Posterior vena cava (tissue), 2 donors: ENCODE measurements at regions of chr7 and their contacts with region 1.

Region 1: GRCh38 chr7:69677054-69677852 is 79.0 kb downstream of the AUTS2 start:
- DNase-seq: no peak

Region 2: DNA sequence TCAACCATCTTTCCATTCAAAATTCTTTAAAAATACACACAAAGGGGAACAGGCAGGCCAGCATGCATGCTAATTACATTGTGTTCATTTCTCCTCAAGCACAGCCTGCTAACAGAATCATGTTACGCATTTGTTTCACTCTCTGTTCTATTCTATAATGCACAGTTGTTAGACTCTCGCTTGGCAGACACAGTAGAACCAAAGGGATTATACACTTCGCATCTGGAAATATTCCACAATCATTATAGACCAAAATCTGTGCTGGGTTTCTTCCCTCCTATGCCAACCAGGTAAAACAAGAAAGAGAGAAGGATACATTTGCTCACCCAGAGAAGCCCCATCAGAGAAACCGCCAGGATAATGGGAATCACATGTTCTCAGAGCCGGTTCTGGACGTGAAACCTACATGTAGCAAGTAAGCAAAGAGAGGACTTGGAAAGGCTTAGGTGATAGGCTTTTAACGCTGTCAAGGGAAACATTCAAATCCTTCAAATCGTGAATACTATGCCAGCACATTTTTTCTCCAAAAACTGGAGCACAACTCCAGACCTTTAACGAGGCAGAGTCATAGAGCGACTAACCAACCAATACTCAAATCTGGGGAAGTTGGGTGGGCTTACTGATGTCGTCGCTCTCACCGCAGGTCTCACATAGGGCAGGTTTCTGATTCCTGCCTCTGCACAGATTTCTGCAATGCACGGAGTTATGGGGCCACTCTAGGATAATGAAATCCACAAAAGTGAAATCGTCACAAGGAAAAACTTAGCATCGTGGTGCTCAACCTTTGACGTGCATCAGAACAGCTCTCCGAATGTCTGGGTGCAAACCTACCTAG is 459.5 kb before region 1 on chr7:
- intact Hi-C with region 1: no loop called
- DNase-seq: no peak

Region 3: GRCh38 chr7:69599955-69600709 is 77.1 kb before region 1 on chr7:
- intact Hi-C with region 1: loop called in 1 of 2 experiments (anchors 10 kb)
- DNase-seq: no peak

Region 4: DNA sequence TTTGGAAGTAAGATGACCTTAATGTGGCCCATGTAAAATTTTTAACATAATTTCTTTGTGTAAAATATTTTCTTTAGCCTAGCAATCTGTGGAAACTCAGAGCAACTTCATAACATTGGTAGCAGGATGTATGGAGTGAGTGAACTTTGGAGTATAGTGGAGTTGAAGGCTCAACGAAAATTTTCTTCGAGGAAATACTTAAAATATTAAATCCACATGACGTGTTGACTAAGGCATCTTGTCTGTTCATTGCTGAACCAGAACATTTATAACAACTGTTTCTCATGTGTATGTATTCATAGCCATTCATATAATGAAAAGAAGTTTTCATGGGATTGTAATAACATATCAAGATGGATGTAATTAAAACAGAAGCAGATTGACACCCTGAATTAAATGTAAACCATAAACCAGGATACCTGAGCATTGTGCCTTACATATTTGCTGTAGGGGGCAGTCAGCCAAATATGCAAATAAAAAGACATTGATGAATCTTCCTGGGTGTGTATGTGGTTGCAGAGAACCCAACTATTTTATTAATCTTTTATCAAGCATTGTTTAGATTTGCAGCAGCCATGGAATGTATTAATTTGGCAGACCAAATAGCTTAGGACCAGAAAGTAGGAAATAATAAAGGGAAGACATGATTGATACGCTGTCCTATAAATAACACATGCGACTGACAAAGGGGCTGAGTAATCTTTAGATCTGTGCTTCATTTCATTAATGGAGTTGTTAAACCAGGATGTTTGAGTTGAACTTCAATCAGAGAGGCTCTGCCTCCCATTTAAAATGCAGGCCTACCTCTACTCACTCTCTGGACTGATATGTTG is 67.5 kb before region 1 on chr7:
- intact Hi-C with region 1: loop called (anchors 2 to 10 kb)
- DNase-seq: no peak